ENCODE measurements at regions of chr9 and their contacts with region 1.

Region 1: DNA sequence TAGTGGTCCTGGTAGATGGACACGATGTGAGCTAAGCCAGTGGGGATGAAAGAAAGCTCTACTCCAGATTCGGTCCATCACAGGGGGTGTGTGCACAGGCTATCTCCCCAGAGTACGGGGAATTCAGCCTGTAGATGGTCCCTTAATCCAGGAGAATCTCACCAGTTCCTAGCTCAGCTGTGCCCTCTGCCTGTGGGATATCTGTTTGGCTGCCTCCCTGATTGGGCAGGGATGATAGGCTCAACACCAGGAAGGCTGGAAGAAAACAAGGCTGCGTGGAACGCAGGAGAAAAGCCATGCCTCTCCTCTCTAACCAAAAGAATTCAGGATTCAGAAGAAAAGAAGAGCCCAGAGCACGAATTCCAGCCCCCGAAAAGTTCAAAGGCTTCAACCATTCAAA is 40.9 kb downstream of the VLDLR start:
- DNase-seq: no peak
- ATAC-seq: peak; percentile 26 to 65 (median 54)
- H3K4me3 ChIP-seq: no peak overlapping the region
- H3K27ac ChIP-seq: peak overlapping the region; percentile 78
- H3K4me1 ChIP-seq: peaks cover 19% of the 10 kb centered on the region
- H3K27me3 ChIP-seq: no peaks in the 10 kb centered on the region
- CTCF ChIP-seq: no peak

Region 2: GRCh38 chr9:2630158-2630557 is 32.3 kb before region 1 on chr9:
- intact Hi-C with region 1: no loop called
- DNase-seq: no peak
- ATAC-seq: peak; percentile 73 to 89 (median 83)
- H3K4me3 ChIP-seq: no peak overlapping the region
- H3K27ac ChIP-seq: peak overlapping the region; percentile 81
- H3K4me1 ChIP-seq: peaks cover 53% of the 10 kb centered on the region
- H3K27me3 ChIP-seq: no peaks in the 10 kb centered on the region
- CTCF ChIP-seq: no peak

Region 3: DNA sequence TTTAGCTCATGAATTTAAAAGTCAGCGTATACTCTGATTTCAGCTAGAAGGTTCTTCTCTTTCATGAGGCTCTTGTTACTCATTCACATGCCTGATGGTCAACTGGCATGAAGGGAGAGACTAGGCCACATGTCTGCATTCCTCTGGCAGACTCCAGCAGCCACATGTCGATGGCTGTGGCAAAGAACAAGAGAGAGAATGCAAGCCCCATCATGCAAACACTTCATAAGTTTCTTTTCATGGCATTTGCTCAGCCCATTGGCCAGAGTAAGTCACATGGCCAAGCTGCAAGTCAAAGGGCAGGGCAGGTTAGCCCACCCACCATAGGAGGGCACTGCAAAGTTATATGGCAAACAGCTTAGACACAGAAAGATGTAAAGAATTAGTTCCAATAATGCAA is 60.2 kb after region 1 on chr9:
- intact Hi-C with region 1: loop called (anchors 5 kb)
- DNase-seq: peak; percentile 27 to 61
- ATAC-seq: peak; percentile 92 to 97 (median 94)
- H3K4me3 ChIP-seq: no peak overlapping the region
- H3K27ac ChIP-seq: peak overlapping the region; percentile 72
- H3K4me1 ChIP-seq: peaks cover 14% of the 10 kb centered on the region
- H3K27me3 ChIP-seq: no peaks in the 10 kb centered on the region
- CTCF ChIP-seq: no peak